ENCODE measurements at regions of chr10 and their contacts with region 1.

Region 1: DNA sequence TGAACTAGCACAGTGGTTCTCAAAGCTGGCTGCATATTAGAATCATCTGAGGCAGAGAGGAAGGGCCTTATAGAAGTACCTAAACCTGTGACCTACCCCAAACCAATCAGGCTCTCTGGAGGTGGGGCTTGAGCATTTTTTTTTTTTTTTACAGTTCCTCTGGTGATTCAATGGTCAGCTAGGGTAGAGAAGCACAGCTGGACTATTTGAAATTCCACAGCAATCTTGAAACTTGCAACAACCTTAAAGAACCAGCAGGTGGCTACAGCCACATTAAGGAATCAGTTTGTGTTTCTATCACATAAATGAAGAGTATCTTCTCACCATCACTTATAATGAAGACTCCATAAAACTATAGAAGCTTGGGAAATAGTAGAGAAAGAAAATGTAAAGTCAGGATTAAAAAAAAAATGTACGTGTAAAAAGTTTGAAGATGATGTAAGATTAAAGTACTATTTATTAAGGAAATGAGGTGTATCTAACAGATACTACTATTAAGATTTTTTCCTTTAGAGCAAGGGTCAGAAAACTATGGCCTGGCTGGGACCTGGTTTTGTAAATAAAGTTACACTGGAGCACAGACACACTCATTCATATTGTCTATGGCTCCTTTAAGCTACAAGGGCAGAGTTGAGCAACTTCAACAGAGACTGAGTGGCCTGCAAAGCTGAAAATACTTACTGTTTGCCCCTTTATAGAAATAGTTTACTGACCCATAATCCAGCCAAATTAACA is 3.8 kb downstream of the RTKN2 start:
- DNase-seq: peak in 1 of 2 experiments; percentile 34
- H3K4me3 ChIP-seq: no peak overlapping the region
- H3K27ac ChIP-seq: no peak overlapping the region
- H3K4me1 ChIP-seq: peaks cover 0 to 4% (median 2%) of the 10 kb centered on the region in 4 experiments; a peak in 3 of 7 replicates
- H3K27me3 ChIP-seq: no peaks in the 10 kb centered on the region; a peak in 1 of 7 replicates
- CTCF ChIP-seq: peak in 2 of 3 experiments; percentile 28 to 46; a peak in 2 of 4 replicates
- EP300 ChIP-seq: no peak
- POLR2A ChIP-seq: no peak
- RAD21 ChIP-seq: peak; percentile 30 to 47; a peak in 3 of 4 replicates

Region 2: GRCh38 chr10:62199584-62199983 is 65.3 kb before region 1 on chr10:
- CTCF ChIA-PET with region 1: no interaction called
- POLR2A ChIA-PET with region 1: no interaction called
- DNase-seq: no peak
- H3K4me3 ChIP-seq: no peak overlapping the region
- H3K27ac ChIP-seq: no peak overlapping the region
- H3K4me1 ChIP-seq: no peaks in the 10 kb centered on the region
- H3K27me3 ChIP-seq: no peaks in the 10 kb centered on the region
- CTCF ChIP-seq: no peak
- EP300 ChIP-seq: no peak
- POLR2A ChIP-seq: no peak
- RAD21 ChIP-seq: no peak

Region 3: GRCh38 chr10:62244780-62245467 is 19.9 kb before region 1 on chr10:
- CTCF ChIA-PET with region 1: interaction called, 14 read pairs
- POLR2A ChIA-PET with region 1: no interaction called
- DNase-seq: no peak
- H3K4me3 ChIP-seq: no peak overlapping the region
- H3K27ac ChIP-seq: no peak overlapping the region
- H3K4me1 ChIP-seq: 0 out of 7 replicates have a peak, but pooled peaks cover 0 to 2% (median 0%) of the 10 kb centered on the region in 4 experiments
- H3K27me3 ChIP-seq: no peaks in the 10 kb centered on the region
- CTCF ChIP-seq: peak in 2 of 3 experiments; percentile 58 to 73; a peak in 3 of 4 replicates
- EP300 ChIP-seq: no peak
- POLR2A ChIP-seq: no peak
- RAD21 ChIP-seq: peak; percentile 75 to 76

Region 4: DNA sequence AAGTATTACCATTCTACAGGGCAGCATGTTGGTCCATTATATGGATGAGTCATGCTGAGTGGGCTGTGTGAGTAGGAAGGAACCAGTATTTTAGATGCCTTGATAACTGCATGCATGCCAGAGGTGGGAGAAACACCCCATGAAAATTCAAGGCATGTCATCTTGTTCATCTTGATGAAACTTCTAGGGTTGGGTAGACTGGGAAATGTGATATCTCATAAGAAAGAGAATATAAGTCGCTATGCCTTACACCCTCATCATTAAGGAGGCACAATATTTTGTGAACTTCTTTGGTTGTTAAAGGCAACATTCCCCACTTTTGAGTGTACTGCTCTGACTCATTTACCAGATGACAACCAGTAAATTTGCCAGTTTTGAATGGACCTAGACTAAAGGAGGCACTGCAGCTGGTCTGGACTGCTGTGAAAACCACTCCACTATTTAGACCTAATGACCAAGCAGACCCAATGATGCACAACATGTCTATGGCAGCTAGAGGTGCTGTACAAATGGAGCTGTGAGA is 157.3 kb after region 1 on chr10:
- CTCF ChIA-PET with region 1: interaction called, 12 read pairs
- POLR2A ChIA-PET with region 1: no interaction called
- DNase-seq: no peak
- H3K4me3 ChIP-seq: no peak overlapping the region
- H3K27ac ChIP-seq: no peak overlapping the region
- H3K4me1 ChIP-seq: peaks cover 0 to 5% (median 0%) of the 10 kb centered on the region in 4 experiments; a peak in 1 of 7 replicates
- H3K27me3 ChIP-seq: peaks cover 9 to 23% (median 10%) of the 10 kb centered on the region in 4 experiments; a peak in 6 of 7 replicates
- CTCF ChIP-seq: no peak
- EP300 ChIP-seq: no peak
- POLR2A ChIP-seq: no peak
- RAD21 ChIP-seq: no peak